ENCODE measurements at regions of chr1 and their contacts with region 1.

Region 1: GRCh38 chr1:83931658-83932253 is 67.2 kb downstream of the TTLL7 start:
- DNase-seq: no peak
- ATAC-seq: peak; percentile 61
- H3K4me3 Mint-ChIP-seq: no peak overlapping the region
- H3K27ac Mint-ChIP-seq: no peak overlapping the region
- H3K4me1 Mint-ChIP-seq: no peaks in the 10 kb centered on the region
- H3K27me3 Mint-ChIP-seq: no peaks in the 10 kb centered on the region
- CTCF ChIP-seq: no peak

Region 2: GRCh38 chr1:84122780-84123382 is 191.1 kb after region 1 on chr1:
- CTCF ChIA-PET with region 1: interaction called, 46 read pairs
- POLR2A ChIA-PET with region 1: no interaction called
- intact Hi-C with region 1: loop called (anchors 1 kb)
- DNase-seq: no peak
- ATAC-seq: peak; percentile 49
- H3K4me3 Mint-ChIP-seq: no peak overlapping the region
- H3K27ac Mint-ChIP-seq: no peak overlapping the region
- H3K4me1 Mint-ChIP-seq: no peaks in the 10 kb centered on the region
- H3K27me3 Mint-ChIP-seq: no peaks in the 10 kb centered on the region
- CTCF ChIP-seq: no peak

Region 3: DNA sequence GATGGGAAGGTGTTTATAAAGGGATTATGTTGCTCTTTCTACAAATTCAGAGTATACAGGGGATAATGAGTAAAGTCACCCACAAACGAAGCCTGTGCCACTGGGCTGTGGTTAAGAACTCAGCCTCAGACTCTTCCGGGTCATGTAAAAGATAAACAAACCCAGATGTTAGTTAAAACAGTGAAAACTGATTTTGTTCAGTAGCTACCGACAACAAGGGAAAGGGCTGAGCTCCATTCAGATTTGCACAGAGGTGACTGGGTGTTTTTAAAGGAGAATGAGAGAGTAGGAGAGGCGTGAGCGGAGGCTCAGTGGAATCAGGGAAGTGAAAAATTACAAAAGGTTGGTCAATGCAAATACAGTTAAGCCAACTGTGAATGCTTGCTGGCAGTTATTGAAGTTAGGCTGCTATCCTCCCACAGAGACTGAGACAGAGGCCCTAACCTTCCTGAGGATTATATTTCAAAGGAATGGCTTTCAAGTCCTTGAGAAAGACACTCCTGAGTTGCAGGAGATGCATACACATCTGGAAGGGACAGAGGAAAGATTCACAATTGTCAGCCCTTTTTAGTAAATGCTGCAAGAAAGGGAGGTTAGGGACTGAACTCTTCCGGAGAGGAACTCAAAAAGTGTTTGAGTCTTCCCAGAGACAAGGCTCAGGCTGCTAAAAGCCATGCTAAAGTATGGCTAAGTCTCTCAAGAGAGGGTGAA is 339.8 kb after region 1 on chr1:
- CTCF ChIA-PET with region 1: no interaction called
- POLR2A ChIA-PET with region 1: no interaction called
- intact Hi-C with region 1: no loop called
- DNase-seq: no peak
- ATAC-seq: peak; percentile 95
- H3K4me3 Mint-ChIP-seq: peak overlapping the region; percentile 60
- H3K27ac Mint-ChIP-seq: peak overlapping the region; percentile 85
- H3K4me1 Mint-ChIP-seq: peaks cover 25% of the 10 kb centered on the region
- H3K27me3 Mint-ChIP-seq: no peaks in the 10 kb centered on the region
- CTCF ChIP-seq: no peak

Region 4: DNA sequence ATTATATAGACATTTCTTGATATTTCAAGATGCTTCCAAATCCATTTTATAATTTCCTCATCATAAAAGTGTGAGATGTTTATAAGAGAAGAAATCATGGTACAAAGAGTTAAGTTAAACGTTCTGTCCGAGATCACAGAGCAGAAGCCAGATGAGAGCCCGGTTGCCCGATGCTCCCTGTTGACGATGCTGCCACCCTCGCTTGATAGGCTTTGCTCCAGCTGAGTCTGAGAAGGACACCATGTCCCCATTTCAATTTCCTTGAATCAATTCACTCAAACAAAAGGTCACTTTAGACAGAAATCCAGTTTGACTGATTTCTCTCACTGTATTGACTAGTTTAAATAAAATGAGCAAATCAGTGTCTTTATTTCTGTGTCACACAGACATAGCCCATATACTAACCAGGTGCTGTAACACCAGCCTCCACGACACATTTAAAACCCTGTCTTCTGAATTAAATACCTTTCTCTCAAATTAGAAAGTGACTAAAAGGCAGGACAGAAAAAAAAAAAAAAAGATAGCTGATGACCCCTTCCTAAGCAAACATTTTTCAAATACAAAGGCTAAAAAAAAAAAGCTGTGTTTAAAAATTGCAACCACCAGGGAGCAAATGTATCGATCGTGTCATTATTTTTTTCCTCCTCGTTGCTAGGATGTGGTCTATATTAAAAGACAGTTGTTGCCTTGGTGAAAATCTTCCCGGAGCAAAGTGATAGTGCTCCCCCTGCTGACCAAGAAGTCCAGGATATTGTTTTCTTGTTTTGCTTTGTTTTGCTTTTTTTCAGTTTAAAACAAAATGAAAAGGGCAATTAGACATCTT is 501.7 kb after region 1 on chr1:
- CTCF ChIA-PET with region 1: interaction called, 4 read pairs
- POLR2A ChIA-PET with region 1: interaction called, 3 read pairs
- intact Hi-C with region 1: loop called (anchors 1 kb)
- DNase-seq: no peak
- ATAC-seq: peak; percentile 59
- H3K4me3 Mint-ChIP-seq: peak overlapping the region; percentile 65
- H3K27ac Mint-ChIP-seq: peak overlapping the region; percentile 15
- H3K4me1 Mint-ChIP-seq: peaks cover 9% of the 10 kb centered on the region
- H3K27me3 Mint-ChIP-seq: no peaks in the 10 kb centered on the region
- CTCF ChIP-seq: peak; percentile 48

Region 5: GRCh38 chr1:84753516-84754385 is 822.0 kb after region 1 on chr1:
- CTCF ChIA-PET with region 1: interaction called, 6 read pairs
- POLR2A ChIA-PET with region 1: no interaction called
- intact Hi-C with region 1: loop called (anchors 1 kb)
- DNase-seq: peak; percentile 34
- ATAC-seq: peak; percentile 81
- H3K4me3 Mint-ChIP-seq: no peak overlapping the region
- H3K27ac Mint-ChIP-seq: no peak overlapping the region
- H3K4me1 Mint-ChIP-seq: peaks cover 4% of the 10 kb centered on the region
- H3K27me3 Mint-ChIP-seq: peaks cover 22% of the 10 kb centered on the region
- CTCF ChIP-seq: peak; percentile 51

Region 6: DNA sequence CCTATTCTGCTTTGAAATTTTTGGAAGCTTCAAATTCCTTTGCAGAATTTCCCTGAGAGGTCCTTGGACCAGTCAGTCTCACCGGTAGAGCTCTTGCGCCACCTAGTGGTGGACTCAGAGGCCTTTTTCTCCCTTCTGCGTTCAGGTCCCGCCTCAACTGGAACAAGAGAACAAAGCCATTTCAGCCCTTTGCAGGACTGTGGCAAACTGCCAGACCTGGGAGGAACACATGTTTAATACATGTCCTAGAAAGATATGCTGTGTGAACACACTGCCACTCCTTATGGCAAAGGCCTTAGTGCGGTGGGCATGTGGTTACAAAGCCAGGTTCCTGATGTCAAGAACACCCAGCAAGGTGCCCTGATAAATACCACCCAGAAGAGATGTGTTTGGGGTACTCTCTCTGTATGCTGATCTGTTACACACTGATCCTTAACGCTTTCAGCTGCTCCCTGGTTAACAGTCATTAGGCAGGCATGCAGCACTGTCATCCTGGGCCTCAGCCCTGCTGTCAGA is 840.7 kb after region 1 on chr1:
- CTCF ChIA-PET with region 1: interaction called, 12 read pairs
- POLR2A ChIA-PET with region 1: no interaction called
- intact Hi-C with region 1: loop called (anchors 1 kb)
- DNase-seq: peak; percentile 58
- ATAC-seq: peak; percentile 71
- H3K4me3 Mint-ChIP-seq: no peak overlapping the region
- H3K27ac Mint-ChIP-seq: no peak overlapping the region
- H3K4me1 Mint-ChIP-seq: no peaks in the 10 kb centered on the region
- H3K27me3 Mint-ChIP-seq: peaks cover 5% of the 10 kb centered on the region
- CTCF ChIP-seq: peak; percentile 43

Region 7: DNA sequence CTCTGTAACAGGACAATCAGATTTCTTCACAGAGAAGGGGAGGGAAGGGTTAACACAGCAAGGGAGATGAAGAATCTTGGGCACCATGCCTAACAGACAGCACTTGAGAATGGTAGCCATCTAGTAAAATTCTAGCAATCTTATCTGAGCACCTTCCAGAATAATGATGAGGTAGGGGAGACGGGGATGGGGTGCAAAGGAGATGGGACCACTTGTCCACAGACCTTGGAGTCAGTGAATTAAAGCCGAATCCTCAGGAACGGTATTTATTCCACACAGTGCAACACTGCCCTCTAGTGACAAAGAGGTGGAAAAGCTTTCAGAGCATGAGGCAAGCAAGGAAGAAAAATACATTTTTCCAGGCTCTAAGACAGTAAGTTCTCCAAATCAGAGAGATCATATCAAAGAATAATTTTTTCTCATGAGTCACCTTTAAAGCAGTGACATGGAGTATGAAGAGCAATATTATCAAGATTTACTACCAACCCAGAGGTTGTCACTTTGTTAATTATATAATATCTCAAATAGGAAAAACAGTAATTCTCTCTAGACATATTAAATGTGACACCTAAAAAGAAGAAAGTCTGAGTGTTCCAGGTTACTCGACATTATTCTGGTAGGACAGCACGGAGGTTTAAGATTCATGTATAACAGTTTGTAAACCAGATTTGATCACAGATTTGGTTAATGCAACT is 1004.5 kb after region 1 on chr1:
- CTCF ChIA-PET with region 1: no interaction called
- POLR2A ChIA-PET with region 1: no interaction called
- intact Hi-C with region 1: loop called (anchors 2 kb)
- DNase-seq: no peak
- ATAC-seq: peak; percentile 70
- H3K4me3 Mint-ChIP-seq: no peak overlapping the region
- H3K27ac Mint-ChIP-seq: no peak overlapping the region
- H3K4me1 Mint-ChIP-seq: peaks cover 4% of the 10 kb centered on the region
- H3K27me3 Mint-ChIP-seq: no peaks in the 10 kb centered on the region
- CTCF ChIP-seq: peak; percentile 99